ENCODE measurements at regions of chr5 and their contacts with region 1.

Region 1: DNA sequence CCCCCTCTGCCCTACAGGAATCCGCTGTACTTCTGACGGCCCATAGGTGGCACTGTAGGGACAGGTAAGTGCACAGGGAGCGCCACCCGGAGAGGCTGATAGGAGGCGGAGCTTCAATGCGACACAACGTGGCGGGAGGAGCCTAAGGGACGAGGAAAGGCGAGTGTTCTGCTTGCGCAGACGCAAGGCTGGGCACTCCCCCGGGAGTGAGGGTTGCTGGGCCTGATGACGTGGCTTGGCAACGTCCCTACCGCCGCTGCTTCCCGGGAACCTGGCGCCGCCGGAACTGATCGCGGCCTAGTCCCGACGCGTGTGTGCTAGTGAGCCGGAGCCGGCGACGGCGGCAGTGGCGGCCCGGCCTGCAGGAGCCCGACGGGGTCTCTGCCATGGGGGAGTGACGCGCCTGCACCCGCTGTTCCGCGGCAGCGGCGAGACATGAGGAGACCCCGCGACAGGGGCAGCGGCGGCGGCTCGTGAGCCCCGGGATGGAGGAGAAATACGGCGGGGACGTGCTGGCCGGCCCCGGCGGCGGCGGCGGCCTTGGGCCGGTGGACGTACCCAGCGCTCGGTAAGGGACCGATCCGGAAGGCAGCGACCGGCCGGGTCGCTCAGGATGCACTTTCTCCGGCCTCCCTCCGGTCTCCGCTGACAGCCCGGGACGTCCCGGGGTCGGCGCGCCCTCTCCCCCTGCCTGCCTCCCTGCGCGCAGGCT is at the start of gene SLC30A5:
- DNase-seq: peak; percentile 96 to 100 (median 98)
- ATAC-seq: peak; percentile 98
- H3K4me3 ChIP-seq: peak within 1 kb of the TSS; percentile 67 to 69
- H3K4me3 Mint-ChIP-seq: peak within 1 kb of the TSS; percentile 91
- H3K27ac ChIP-seq: peak within 1 kb of the TSS; percentile 92 to 93
- H3K27ac Mint-ChIP-seq: peak within 1 kb of the TSS; percentile 95
- H3K4me1 ChIP-seq: peaks cover 20% of the 10 kb centered on the region
- H3K4me1 Mint-ChIP-seq: peaks cover 36% of the 10 kb centered on the region
- H3K27me3 ChIP-seq: no peaks in the 10 kb centered on the region
- H3K27me3 Mint-ChIP-seq: no peaks in the 10 kb centered on the region
- CTCF ChIP-seq: peak; percentile 76
- total RNA-seq, gene SLC30A5: 14.5 to 18.5 TPM

Region 2: DNA sequence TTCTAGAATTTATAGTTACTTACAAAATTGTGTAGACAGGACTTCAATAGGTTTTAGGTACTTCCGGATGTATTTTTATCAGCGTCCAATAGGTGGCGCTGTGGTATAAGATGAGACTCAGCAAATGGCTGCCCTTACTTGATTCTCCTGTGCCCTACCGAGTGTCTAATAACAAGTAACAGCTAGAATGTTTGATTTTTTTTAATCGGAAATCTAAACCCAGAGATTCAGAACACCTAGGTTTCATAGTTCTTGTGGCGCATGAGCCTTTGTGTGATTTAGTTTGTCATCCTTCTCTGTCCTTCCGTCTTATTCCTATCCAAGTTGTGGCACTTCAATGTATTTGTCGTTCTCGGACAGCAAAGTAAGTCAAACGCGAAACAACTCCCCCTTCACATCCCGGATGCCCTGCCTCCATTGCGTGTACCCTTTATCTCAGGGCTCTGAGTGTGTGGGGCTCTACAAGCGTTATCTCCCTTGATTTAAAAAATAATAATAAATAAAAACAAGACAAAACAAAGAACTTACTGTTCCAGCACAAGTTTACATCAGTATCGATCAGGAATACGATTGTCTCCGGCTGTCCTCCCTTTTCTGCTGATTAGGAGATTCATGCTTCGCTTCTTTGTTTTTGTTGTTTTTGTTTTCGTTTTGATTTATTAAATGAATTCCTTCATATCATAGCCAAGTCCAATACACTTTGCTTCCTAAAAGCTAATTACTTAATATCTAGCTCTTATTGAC is 50.8 kb before region 1 on chr5:
- CTCF ChIA-PET with region 1: interaction called, 9 read pairs
- POLR2A ChIA-PET with region 1: interaction called, 7 read pairs
- intact Hi-C with region 1: loop called (anchors 1 to 2 kb)
- DNase-seq: peak; percentile 50 to 95 (median 78)
- ATAC-seq: peak; percentile 97
- H3K4me3 ChIP-seq: peak overlapping the region; percentile 54 to 64
- H3K4me3 Mint-ChIP-seq: peak overlapping the region; percentile 89
- H3K27ac ChIP-seq: peak overlapping the region; percentile 69 to 81
- H3K27ac Mint-ChIP-seq: peak overlapping the region; percentile 95
- H3K4me1 ChIP-seq: peaks cover 3% of the 10 kb centered on the region
- H3K4me1 Mint-ChIP-seq: peaks cover 11% of the 10 kb centered on the region
- H3K27me3 ChIP-seq: no peaks in the 10 kb centered on the region
- H3K27me3 Mint-ChIP-seq: no peaks in the 10 kb centered on the region
- CTCF ChIP-seq: peak; percentile 88

Region 3: GRCh38 chr5:69166686-69167492 is 73.0 kb after region 1 on chr5 and contains the start of gene CCNB1:
- CTCF ChIA-PET with region 1: interaction called, 5 read pairs
- POLR2A ChIA-PET with region 1: interaction called, 4 read pairs
- intact Hi-C with region 1: loop called (anchors 1 kb)
- DNase-seq: peak; percentile 93 to 98 (median 96)
- ATAC-seq: peak; percentile 100
- H3K4me3 ChIP-seq: peak within 1 kb of the TSS; percentile 84 to 87
- H3K4me3 Mint-ChIP-seq: peak within 1 kb of the TSS; percentile 94
- H3K27ac ChIP-seq: peak within 1 kb of the TSS; percentile 50 to 61
- H3K27ac Mint-ChIP-seq: peak within 1 kb of the TSS; percentile 84
- H3K4me1 ChIP-seq: peaks cover 9% of the 10 kb centered on the region
- H3K4me1 Mint-ChIP-seq: peaks cover 27% of the 10 kb centered on the region
- H3K27me3 ChIP-seq: no peaks in the 10 kb centered on the region
- H3K27me3 Mint-ChIP-seq: no peaks in the 10 kb centered on the region
- CTCF ChIP-seq: no peak
- total RNA-seq, gene CCNB1: 0.75 to 0.95 TPM

Region 4: GRCh38 chr5:69217548-69218526 is 123.9 kb after region 1 on chr5:
- CTCF ChIA-PET with region 1: no interaction called
- POLR2A ChIA-PET with region 1: no interaction called
- intact Hi-C with region 1: loop called (anchors 1 kb)
- DNase-seq: peak; percentile 90 to 97 (median 94)
- ATAC-seq: peak; percentile 92
- H3K4me3 ChIP-seq: peak overlapping the region; percentile 85 to 97
- H3K4me3 Mint-ChIP-seq: peak overlapping the region; percentile 100
- H3K27ac ChIP-seq: peak overlapping the region; percentile 91 to 95
- H3K27ac Mint-ChIP-seq: peak overlapping the region; percentile 99
- H3K4me1 ChIP-seq: peaks cover 15% of the 10 kb centered on the region
- H3K4me1 Mint-ChIP-seq: peaks cover 28% of the 10 kb centered on the region
- H3K27me3 ChIP-seq: no peaks in the 10 kb centered on the region
- H3K27me3 Mint-ChIP-seq: no peaks in the 10 kb centered on the region
- CTCF ChIP-seq: no peak

Region 5: DNA sequence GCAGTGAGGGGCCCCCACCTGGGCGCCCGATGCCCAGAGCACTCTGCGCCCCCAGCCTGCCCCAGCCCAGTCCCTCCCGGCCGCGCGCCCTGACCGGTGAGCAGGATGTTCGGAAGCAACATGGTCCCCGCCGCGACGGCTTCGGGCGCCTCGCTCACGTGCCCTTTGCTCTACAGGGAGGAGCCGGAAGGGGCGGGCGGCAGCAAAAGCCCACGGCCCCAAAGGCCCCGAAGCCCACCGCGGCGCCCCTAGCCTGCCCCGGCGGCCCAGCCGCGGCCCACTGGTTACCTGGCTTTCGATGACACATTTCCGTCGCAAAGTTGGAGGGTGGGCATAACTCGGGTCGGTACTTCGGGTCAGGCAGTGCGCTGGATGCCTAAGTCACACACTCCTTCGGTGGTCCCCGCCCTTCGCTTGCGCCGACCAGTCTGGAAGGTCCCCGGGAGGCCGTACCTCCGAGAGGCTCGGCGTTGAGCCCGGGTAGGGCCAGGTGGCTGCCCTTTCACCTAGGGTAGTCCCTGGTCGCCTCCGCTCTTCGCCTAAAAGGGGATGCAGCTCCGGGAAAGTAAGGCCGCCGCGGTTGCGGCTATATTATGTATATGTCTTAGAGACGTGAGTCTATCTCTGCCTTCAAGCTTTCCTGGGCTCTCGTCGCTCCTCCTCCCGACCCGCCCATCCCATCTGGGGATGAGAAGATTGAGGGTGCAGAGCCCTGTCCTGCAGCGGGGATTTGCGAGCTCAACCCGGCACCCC is 275.6 kb after region 1 on chr5 and contains the starts of genes AK6, RAD17 and TAF9:
- CTCF ChIA-PET with region 1: interaction called, 4 read pairs
- POLR2A ChIA-PET with region 1: interaction called, 3 read pairs
- intact Hi-C with region 1: loop called (anchors 1 kb)
- DNase-seq: peak; percentile 82 to 96 (median 92)
- ATAC-seq: peak; percentile 90
- H3K4me3 ChIP-seq: peak within 1 kb of the TSS; percentile 77 to 95
- H3K4me3 Mint-ChIP-seq: peak within 1 kb of the TSS; percentile 93
- H3K27ac ChIP-seq: peak within 1 kb of the TSS; percentile 95 to 99
- H3K27ac Mint-ChIP-seq: peak within 1 kb of the TSS; percentile 99
- H3K4me1 ChIP-seq: peaks cover 21% of the 10 kb centered on the region
- H3K4me1 Mint-ChIP-seq: peaks cover 52% of the 10 kb centered on the region
- H3K27me3 ChIP-seq: no peaks in the 10 kb centered on the region
- H3K27me3 Mint-ChIP-seq: no peaks in the 10 kb centered on the region
- CTCF ChIP-seq: no peak
- total RNA-seq, gene AK6: 10.2 to 12.1 TPM
- total RNA-seq, gene RAD17: 19.5 to 22.2 TPM
- total RNA-seq, gene TAF9: 51.3 to 56.6 TPM

Measured in CD8-positive, alpha-beta T cell (primary cell).